ENCODE measurements at regions of chrX and their contacts with region 1.

Region 1: GRCh38 chrX:66408507-66408906 is 230.4 kb downstream of the EDA2R start:
- DNase-seq: no peak
- ATAC-seq: peak; percentile 26
- H3K4me3 Mint-ChIP-seq: no peak overlapping the region
- H3K27ac Mint-ChIP-seq: no peak overlapping the region
- H3K4me1 Mint-ChIP-seq: no peaks in the 10 kb centered on the region
- H3K27me3 Mint-ChIP-seq: no peaks in the 10 kb centered on the region

Region 2: GRCh38 chrX:65575022-65575421 is 833.5 kb before region 1 on chrX:
- CTCF ChIA-PET with region 1: no interaction called
- POLR2A ChIA-PET with region 1: no interaction called
- intact Hi-C with region 1: loop called (anchors 5 to 10 kb)
- DNase-seq: no peak
- ATAC-seq: no peak
- H3K4me3 Mint-ChIP-seq: no peak overlapping the region
- H3K27ac Mint-ChIP-seq: no peak overlapping the region
- H3K4me1 Mint-ChIP-seq: no peaks in the 10 kb centered on the region
- H3K27me3 Mint-ChIP-seq: no peaks in the 10 kb centered on the region

Region 3: GRCh38 chrX:66004928-66005829 is 403.3 kb before region 1 on chrX:
- CTCF ChIA-PET with region 1: no interaction called
- POLR2A ChIA-PET with region 1: no interaction called
- intact Hi-C with region 1: loop called in 1 of 2 experiments (anchors 10 kb)
- DNase-seq: no peak
- ATAC-seq: peak; percentile 57
- H3K4me3 Mint-ChIP-seq: peak overlapping the region; percentile 6
- H3K27ac Mint-ChIP-seq: peak overlapping the region; percentile 84
- H3K4me1 Mint-ChIP-seq: peaks cover 65% of the 10 kb centered on the region
- H3K27me3 Mint-ChIP-seq: no peaks in the 10 kb centered on the region

Region 4: DNA sequence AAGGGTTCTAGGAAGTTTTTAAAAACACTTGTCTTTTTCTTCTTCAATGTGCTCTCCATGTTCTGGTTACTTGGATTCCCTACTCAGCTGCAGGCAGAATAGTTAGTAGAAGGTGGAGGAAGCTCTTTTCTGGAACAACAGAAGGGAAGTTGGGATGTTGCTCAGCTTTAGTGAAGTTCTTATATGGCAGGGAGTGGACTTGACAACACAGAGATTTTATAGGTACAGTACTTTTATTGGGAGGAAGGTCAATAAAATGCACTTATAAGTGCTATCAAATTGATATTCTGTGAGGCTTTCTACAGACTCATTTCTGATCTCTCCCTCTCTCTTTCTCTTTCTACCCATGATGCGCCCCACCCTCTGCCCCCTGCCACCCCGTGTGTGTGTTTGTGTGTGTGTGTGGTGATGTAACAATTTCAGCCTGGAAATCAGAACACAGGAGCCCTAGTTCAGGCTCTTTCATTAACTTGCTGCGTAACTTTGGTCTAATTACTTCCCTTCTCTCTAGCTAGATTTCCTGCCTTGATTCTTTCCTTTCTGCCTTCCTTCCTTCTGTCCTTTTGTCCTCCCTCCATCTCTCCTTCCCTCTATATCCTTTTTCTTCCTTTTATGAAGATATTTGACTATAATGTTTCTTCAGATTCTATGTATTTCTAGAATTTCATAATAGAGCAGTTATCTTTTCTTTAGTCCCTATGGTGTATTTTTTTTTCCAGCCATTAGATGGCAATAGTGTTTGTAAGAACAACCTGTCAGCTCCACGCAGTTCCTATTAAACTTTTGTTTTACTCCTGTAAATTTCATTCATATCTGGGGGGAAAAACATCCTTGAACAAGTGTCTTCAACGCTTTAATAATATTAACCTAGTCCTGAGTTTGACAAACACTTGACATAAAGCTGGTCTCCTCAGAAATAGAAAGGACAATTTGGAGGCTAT is 207.4 kb before region 1 on chrX:
- CTCF ChIA-PET with region 1: interaction called, 3 read pairs
- POLR2A ChIA-PET with region 1: no interaction called
- intact Hi-C with region 1: loop called (anchors 2 to 5 kb)
- DNase-seq: no peak
- ATAC-seq: no peak
- H3K4me3 Mint-ChIP-seq: no peak overlapping the region
- H3K27ac Mint-ChIP-seq: peak overlapping the region; percentile 63
- H3K4me1 Mint-ChIP-seq: peaks cover 20% of the 10 kb centered on the region
- H3K27me3 Mint-ChIP-seq: no peaks in the 10 kb centered on the region